Activated CD8-positive, alpha-beta T cell treated with anti-CD3 and anti-CD28 coated beads, Interleukin-2, amount 10 ng/mL, durations not matched to agents 7 days and 5 days (primary cell): ENCODE measurements at regions of chr14 and their contacts with region 1.

Region 1: DNA sequence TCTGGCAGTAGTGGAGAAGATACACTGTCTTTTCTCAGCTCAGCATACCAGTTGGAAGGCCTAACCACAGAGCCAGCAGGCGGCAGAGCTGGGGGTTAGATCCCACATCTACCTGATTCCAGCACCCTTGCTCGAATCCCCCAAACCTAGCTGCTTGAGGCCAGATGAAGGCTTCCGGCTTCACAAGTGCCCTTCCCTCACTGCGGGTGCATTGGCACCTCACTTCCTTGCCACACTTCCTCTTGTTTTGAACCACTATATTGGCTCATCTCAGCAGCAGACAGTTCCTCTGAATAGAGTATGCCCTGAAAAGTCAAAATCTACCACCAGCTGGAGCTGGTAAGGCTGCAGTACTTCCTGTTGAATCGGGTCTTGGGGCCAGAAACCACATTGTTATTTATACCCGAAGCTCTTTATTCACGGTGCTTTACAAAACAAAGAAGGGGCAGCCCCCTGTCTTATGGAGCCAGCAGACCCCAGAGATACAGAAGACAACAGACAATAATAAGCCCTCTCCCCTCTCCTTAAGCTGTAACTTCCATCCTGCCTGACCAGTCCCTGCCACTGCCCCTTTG is 233.7 kb downstream of the EFCAB11 start:
- DNase-seq: peak; percentile 88
- ATAC-seq: peak; percentile 86
- H3K4me3 Mint-ChIP-seq: peak overlapping the region; percentile 62
- H3K27ac Mint-ChIP-seq: peak overlapping the region; percentile 96
- H3K4me1 Mint-ChIP-seq: peaks cover 78% of the 10 kb centered on the region
- H3K27me3 Mint-ChIP-seq: no peaks in the 10 kb centered on the region

Region 2: DNA sequence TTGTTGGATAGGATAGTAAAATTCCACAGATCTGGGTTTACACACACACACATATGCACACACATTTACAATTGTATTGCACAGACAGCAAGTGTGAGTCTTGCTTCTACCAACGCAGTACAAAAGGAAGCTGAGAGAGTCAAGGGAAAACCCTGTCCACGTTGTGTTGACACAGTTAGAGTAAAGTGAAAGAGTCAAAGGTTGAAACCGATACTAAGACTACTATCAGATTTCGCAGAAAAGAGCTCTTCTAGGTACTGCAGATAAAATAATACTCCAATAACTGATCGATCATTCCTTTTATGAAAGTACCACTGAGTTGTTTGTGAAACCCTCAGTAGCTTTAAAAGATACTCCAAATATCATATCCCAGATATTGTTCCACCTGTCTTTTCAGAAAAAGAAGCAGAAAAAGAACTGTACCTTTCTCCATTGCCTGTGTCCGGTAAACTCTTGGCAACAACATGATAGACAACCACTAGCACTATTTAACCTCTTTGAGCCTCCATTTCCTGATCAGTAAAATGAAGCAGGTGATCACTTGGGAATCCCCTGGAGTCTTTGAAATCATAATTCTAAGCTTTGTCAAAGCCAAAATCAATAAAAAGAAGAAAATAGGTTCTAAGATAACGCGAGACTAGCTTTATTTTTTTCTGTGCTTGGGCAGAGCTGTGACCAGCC is 79.2 kb before region 1 on chr14:
- CTCF ChIA-PET with region 1: interaction called, 8 read pairs
- POLR2A ChIA-PET with region 1: interaction called, 15 read pairs
- DNase-seq: peak; percentile 53
- ATAC-seq: peak; percentile 92
- H3K4me3 Mint-ChIP-seq: peak overlapping the region; percentile 67
- H3K27ac Mint-ChIP-seq: peak overlapping the region; percentile 92
- H3K4me1 Mint-ChIP-seq: peaks cover 57% of the 10 kb centered on the region
- H3K27me3 Mint-ChIP-seq: no peaks in the 10 kb centered on the region

Region 3: GRCh38 chr14:89681086-89682018 is 39.5 kb before region 1 on chr14:
- CTCF ChIA-PET with region 1: interaction called, 12 read pairs
- POLR2A ChIA-PET with region 1: interaction called, 11 read pairs
- DNase-seq: peak; percentile 47
- ATAC-seq: peak; percentile 76
- H3K4me3 Mint-ChIP-seq: peak overlapping the region; percentile 68
- H3K27ac Mint-ChIP-seq: peak overlapping the region; percentile 92
- H3K4me1 Mint-ChIP-seq: peaks cover 39% of the 10 kb centered on the region
- H3K27me3 Mint-ChIP-seq: no peaks in the 10 kb centered on the region

Region 4: GRCh38 chr14:89767861-89768268 is 47.0 kb after region 1 on chr14:
- CTCF ChIA-PET with region 1: interaction called, 11 read pairs
- POLR2A ChIA-PET with region 1: no interaction called
- DNase-seq: peak; percentile 82
- ATAC-seq: peak; percentile 93
- H3K4me3 Mint-ChIP-seq: peak overlapping the region; percentile 10
- H3K27ac Mint-ChIP-seq: peak overlapping the region; percentile 85
- H3K4me1 Mint-ChIP-seq: peaks cover 39% of the 10 kb centered on the region
- H3K27me3 Mint-ChIP-seq: peaks cover 5% of the 10 kb centered on the region